BJ (cell line): ENCODE measurements at regions of chr6 and their contacts with region 1.

Region 1: DNA sequence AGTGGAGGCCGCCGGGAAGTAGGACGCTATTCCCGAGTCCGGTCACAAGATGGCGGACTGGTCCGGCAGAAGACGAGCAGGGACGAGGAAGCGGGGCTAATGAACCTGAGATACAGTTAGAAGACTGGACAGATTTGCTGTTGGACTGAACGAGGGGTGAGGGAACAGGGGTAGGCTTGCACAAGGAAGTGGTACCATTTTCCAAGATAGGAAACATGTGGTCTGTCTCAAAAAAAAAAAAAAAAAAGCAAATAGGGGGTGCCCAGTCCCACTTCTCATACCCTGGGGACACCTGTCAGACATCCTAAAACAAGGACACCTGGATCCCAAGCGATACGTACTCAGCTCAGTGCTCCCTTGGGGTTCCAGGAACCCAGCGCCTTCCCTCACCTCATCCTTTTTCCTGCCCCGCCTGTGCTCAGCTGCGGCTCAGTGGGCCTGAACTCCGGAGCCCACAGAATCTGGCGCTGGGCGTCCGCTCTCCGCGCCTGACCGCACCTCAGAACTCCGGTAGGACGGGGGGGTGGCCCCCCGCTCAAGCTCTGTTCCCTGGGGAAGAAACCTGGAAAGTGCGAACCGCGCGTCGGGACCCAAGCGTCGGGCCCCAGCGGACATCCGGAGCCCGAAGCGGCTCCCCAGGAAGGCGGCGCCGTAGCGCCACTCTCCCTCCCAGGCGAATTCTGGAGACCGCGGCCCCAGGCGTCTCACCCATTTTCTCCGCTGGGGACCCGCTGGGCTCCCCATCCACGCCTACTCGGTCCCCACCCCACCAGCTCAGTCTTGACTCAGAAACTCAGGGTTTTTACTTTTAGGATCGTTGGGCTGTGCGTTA is at the start of gene LY6G5C:
- DNase-seq: peak; percentile 67
- H3K4me3 ChIP-seq: peak within 1 kb of the TSS; percentile 39
- H3K27me3 ChIP-seq: no peaks in the 10 kb centered on the region
- CTCF ChIP-seq: peak; percentile 75
- polyA plus RNA-seq, gene LY6G5C: 3.1 and 3.6 TPM in 2 replicates

Region 2: GRCh38 chr6:31739639-31740396 is 58.8 kb after region 1 on chr6 and contains the start of gene MSH5:
- CTCF ChIA-PET with region 1: interaction called, 15 read pairs
- POLR2A ChIA-PET with region 1: no interaction called
- DNase-seq: peak; percentile 98
- H3K4me3 ChIP-seq: peak within 1 kb of the TSS; percentile 75
- H3K27me3 ChIP-seq: no peaks in the 10 kb centered on the region
- CTCF ChIP-seq: no peak
- polyA plus RNA-seq, gene MSH5: 9.2 and 10.7 TPM in 2 replicates

Region 3: GRCh38 chr6:31834434-31835198 is 153.6 kb after region 1 on chr6:
- CTCF ChIA-PET with region 1: interaction called, 11 read pairs
- POLR2A ChIA-PET with region 1: no interaction called
- DNase-seq: no peak
- H3K4me3 ChIP-seq: peak overlapping the region; percentile 98
- H3K27me3 ChIP-seq: no peaks in the 10 kb centered on the region
- CTCF ChIP-seq: no peak